ENCODE measurements at regions of chr12 and their contacts with region 1.

Region 1: GRCh38 chr12:90253674-90254181 is 545.1 kb upstream of the ATP2B1 start:
- DNase-seq: peak; percentile 97
- H3K4me3 ChIP-seq: no peak overlapping the region
- H3K27ac ChIP-seq: peak overlapping the region; percentile 45
- H3K4me1 ChIP-seq: peaks cover 24% of the 10 kb centered on the region
- H3K27me3 ChIP-seq: no peaks in the 10 kb centered on the region
- CTCF ChIP-seq: peak; percentile 46 to 55

Region 2: GRCh38 chr12:89949457-89950195 is 304.1 kb before region 1 on chr12:
- CTCF ChIA-PET with region 1: no interaction called
- dilution Hi-C with region 1: no loop called
- in situ Hi-C with region 1: no loop called
- intact Hi-C with region 1: loop called (anchors 2 kb)
- DNase-seq: peak; percentile 91
- H3K4me3 ChIP-seq: no peak overlapping the region
- H3K27ac ChIP-seq: peak overlapping the region; percentile 91
- H3K4me1 ChIP-seq: peaks cover 46% of the 10 kb centered on the region
- H3K27me3 ChIP-seq: no peaks in the 10 kb centered on the region
- CTCF ChIP-seq: peak; percentile 15 to 41

Region 3: GRCh38 chr12:90102957-90103652 is 150.6 kb before region 1 on chr12:
- CTCF ChIA-PET with region 1: no interaction called
- dilution Hi-C with region 1: no loop called
- in situ Hi-C with region 1: no loop called
- intact Hi-C with region 1: loop called (anchors 5 kb)
- DNase-seq: peak; percentile 43
- H3K4me3 ChIP-seq: no peak overlapping the region
- H3K27ac ChIP-seq: no peak overlapping the region
- H3K4me1 ChIP-seq: peaks cover 20% of the 10 kb centered on the region
- H3K27me3 ChIP-seq: no peaks in the 10 kb centered on the region
- CTCF ChIP-seq: peak; percentile 44 to 75

Region 4: DNA sequence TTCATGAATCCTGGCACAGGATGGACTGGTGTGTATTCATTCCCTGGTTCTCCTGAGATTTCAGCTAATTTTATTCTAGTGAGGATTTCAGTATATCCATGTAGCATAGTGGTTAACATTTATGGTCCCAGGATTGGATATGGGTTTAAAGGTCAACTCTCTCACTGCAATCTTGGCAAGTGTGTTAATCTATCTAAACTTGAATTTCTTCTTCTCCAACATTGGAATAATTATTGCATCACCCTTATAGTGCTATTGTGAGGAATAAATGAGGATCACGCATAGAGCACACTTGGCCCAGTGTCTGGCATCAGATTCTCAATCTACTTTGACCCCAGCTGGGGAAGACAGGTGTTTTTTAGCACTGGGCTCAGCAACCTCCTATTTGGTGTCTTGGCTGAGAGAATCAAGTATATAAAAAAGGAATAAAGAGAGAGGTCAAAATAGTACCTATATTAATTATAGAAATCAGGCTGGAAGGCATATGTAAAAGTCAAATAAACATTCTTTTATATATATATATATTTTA is 13.9 kb before region 1 on chr12:
- CTCF ChIA-PET with region 1: no interaction called
- dilution Hi-C with region 1: no loop called
- in situ Hi-C with region 1: no loop called
- intact Hi-C with region 1: no loop called
- DNase-seq: no peak
- H3K4me3 ChIP-seq: no peak overlapping the region
- H3K27ac ChIP-seq: no peak overlapping the region
- H3K4me1 ChIP-seq: peaks cover 11% of the 10 kb centered on the region
- H3K27me3 ChIP-seq: no peaks in the 10 kb centered on the region
- CTCF ChIP-seq: no peak

Measured in mammary epithelial cell (primary cell).